Caco-2 (cell line): ENCODE measurements at regions of chr6 and their contacts with region 1.

Region 1: GRCh38 chr6:31958741-31959739 is at the starts of genes NELFE and SKIC2:
- DNase-seq: peak; percentile 98
- H3K4me3 ChIP-seq: peak within 1 kb of the TSS; percentile 74
- H3K4me3 Mint-ChIP-seq: peak within 1 kb of the TSS; percentile 99
- H3K27ac Mint-ChIP-seq: peak within 1 kb of the TSS; percentile 98
- H3K4me1 ChIP-seq: peaks cover 3% of the 10 kb centered on the region; the same call in 1 of the 2 replicates
- H3K4me1 Mint-ChIP-seq: peaks cover 15% of the 10 kb centered on the region
- H3K27me3 ChIP-seq: no peaks in the 10 kb centered on the region
- H3K27me3 Mint-ChIP-seq: no peaks in the 10 kb centered on the region
- CTCF ChIP-seq: no peak
- total RNA-seq, gene NELFE: 75.3 and 82.0 TPM in 2 replicates
- total RNA-seq, gene SKIC2: 70.0 and 77.9 TPM in 2 replicates

Region 2: DNA sequence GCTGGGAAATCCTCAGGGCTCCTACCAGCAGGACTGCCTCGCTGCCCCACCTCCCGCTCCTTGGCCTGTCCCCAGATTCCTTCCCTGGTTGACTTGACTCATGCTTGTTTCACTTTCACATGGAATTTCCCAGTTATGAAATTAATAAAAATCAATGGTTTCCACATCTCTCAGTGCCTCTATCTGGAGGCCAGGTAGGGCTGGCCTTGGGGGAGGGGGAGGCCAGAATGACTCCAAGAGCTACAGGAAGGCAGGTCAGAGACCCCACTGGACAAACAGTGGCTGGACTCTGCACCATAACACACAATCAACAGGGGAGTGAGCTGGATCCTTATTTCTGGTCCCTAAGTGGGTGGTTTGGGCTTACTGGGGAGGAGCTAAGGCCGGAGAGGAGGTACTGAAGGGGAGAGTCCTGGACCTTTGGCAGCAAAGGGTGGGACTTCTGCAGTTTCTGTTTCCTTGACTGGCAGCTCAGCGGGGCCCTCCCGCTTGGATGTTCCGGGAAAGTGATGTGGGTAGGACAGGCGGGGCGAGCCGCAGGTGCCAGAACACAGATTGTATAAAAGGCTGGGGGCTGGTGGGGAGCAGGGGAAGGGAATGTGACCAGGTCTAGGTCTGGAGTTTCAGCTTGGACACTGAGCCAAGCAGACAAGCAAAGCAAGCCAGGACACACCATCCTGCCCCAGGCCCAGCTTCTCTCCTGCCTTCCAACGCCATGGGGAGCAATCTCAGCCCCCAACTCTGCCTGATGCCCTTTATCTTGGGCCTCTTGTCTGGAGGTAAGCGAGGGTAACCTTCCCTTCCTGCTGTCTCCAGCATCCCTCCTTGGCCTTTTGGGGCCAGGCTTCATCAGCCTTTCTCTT is 13.3 kb before region 1 on chr6 and contains the start of gene CFB:
- CTCF ChIA-PET with region 1: interaction called, 5 read pairs
- POLR2A ChIA-PET with region 1: interaction called, 7 read pairs
- intact Hi-C with region 1: loop called (anchors 1 kb)
- DNase-seq: peak; percentile 88 to 93
- H3K4me3 ChIP-seq: peak within 1 kb of the TSS; percentile 33
- H3K4me3 Mint-ChIP-seq: peak within 1 kb of the TSS; percentile 58
- H3K27ac Mint-ChIP-seq: peak within 1 kb of the TSS; percentile 94
- H3K4me1 ChIP-seq: peaks cover 41% of the 10 kb centered on the region
- H3K4me1 Mint-ChIP-seq: peaks cover 49% of the 10 kb centered on the region
- H3K27me3 ChIP-seq: no peaks in the 10 kb centered on the region
- H3K27me3 Mint-ChIP-seq: no peaks in the 10 kb centered on the region
- CTCF ChIP-seq: no peak
- total RNA-seq, gene CFB: 31.0 and 32.1 TPM in 2 replicates

Region 3: GRCh38 chr6:31971993-31972708 is 13.1 kb after region 1 on chr6 and contains the start of gene DXO:
- CTCF ChIA-PET with region 1: no interaction called
- POLR2A ChIA-PET with region 1: interaction called, 18 read pairs
- intact Hi-C with region 1: loop called (anchors 1 kb)
- DNase-seq: peak; percentile 97 to 98
- H3K4me3 ChIP-seq: peak within 1 kb of the TSS; percentile 76
- H3K4me3 Mint-ChIP-seq: peak within 1 kb of the TSS; percentile 67
- H3K27ac Mint-ChIP-seq: peak within 1 kb of the TSS; percentile 82
- H3K4me1 ChIP-seq: peaks cover 5% of the 10 kb centered on the region; the same call in 1 of the 2 replicates
- H3K4me1 Mint-ChIP-seq: peaks cover 21% of the 10 kb centered on the region
- H3K27me3 ChIP-seq: no peaks in the 10 kb centered on the region
- H3K27me3 Mint-ChIP-seq: no peaks in the 10 kb centered on the region
- CTCF ChIP-seq: no peak
- total RNA-seq, gene DXO: 22.4 and 23.7 TPM in 2 replicates

Region 4: DNA sequence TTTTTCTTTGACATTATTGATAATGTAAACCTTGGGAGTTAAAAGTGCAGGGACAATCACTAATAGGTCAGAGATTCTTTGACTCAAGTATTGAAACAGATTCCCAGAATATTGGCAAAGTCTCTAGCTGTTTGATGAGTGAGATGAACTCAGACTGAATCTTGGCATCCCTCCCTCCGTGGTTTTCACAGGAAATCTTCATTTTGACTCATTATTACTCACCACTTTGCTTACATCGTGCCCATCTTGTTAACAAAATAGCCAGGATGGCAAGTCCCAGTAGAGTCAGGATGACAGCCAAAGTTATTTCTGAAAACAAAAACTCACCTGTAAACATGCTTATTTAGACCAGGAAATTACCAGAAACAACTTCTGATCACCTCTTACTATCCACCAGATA is 410.6 kb after region 1 on chr6:
- CTCF ChIA-PET with region 1: no interaction called
- POLR2A ChIA-PET with region 1: no interaction called
- intact Hi-C with region 1: no loop called
- DNase-seq: no peak
- H3K4me3 ChIP-seq: no peak overlapping the region
- H3K4me3 Mint-ChIP-seq: no peak overlapping the region
- H3K27ac Mint-ChIP-seq: no peak overlapping the region
- H3K4me1 ChIP-seq: 0 out of 2 replicates have a peak, but pooled peaks cover 8% of the 10 kb centered on the region
- H3K4me1 Mint-ChIP-seq: peaks cover 7% of the 10 kb centered on the region
- H3K27me3 ChIP-seq: no peaks in the 10 kb centered on the region
- H3K27me3 Mint-ChIP-seq: no peaks in the 10 kb centered on the region
- CTCF ChIP-seq: no peak